Heart right ventricle (tissue), 16 donors: ENCODE measurements at regions of chr1 and their contacts with region 1.

Region 1: DNA sequence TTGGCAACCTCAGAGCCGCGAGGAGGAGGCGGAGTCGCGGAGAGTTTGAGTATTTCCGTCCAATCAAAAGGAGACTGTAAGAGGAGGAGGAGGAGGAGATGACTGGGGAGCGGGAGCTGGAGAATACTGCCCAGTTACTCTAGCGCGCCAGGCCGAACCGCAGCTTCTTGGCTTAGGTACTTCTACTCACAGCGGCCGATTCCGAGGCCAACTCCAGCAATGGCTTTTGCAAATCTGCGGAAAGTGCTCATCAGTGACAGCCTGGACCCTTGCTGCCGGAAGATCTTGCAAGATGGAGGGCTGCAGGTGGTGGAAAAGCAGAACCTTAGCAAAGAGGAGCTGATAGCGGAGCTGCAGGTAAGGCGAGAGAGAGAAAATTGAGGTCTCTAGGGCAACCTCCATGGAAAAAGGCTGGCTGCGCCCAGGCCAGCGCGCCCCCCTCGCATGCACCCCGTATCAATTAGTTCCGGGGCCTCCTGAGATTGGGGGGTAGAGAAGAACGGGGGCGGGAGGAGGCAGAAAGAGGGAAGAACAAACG is at the start of gene PHGDH:
- DNase-seq: peak; percentile 50 to 56
- ATAC-seq: peak; percentile 66 to 85 (median 78)
- H3K4me3 ChIP-seq: peak within 1 kb of the TSS; percentile 42 to 65 (median 60)
- H3K27ac ChIP-seq: peak within 1 kb of the TSS in 8 of 10 donors; percentile 44 to 77 (median 62)
- H3K4me1 ChIP-seq: peaks cover 0 to 26% (median 16%) of the 10 kb centered on the region in 9 donors
- H3K27me3 ChIP-seq: peaks cover 0 to 28% (median 16%) of the 10 kb centered on the region in 7 donors
- CTCF ChIP-seq: no peak
- total RNA-seq, gene PHGDH: 3.8 to 8.9 (median 5.0) TPM

Region 2: GRCh38 chr1:118960026-118960561 is 751.8 kb before region 1 on chr1:
- intact Hi-C with region 1: loop called in 1 of 10 experiments (anchors 10 kb)
- DNase-seq: no peak
- ATAC-seq: no peak
- H3K4me3 ChIP-seq: no peak overlapping the region
- H3K27ac ChIP-seq: no peak overlapping the region
- H3K4me1 ChIP-seq: no peaks in the 10 kb centered on the region
- H3K27me3 ChIP-seq: peaks cover 0 to 14% (median 0%) of the 10 kb centered on the region in 7 donors
- CTCF ChIP-seq: no peak

Region 3: GRCh38 chr1:119374208-119374874 is 337.5 kb before region 1 on chr1:
- intact Hi-C with region 1: loop called in 1 of 10 experiments (anchors 2 kb)
- DNase-seq: no peak
- ATAC-seq: no peak
- H3K4me3 ChIP-seq: no peak overlapping the region
- H3K27ac ChIP-seq: no peak overlapping the region
- H3K4me1 ChIP-seq: no peaks in the 10 kb centered on the region
- H3K27me3 ChIP-seq: peaks cover 0 to 7% (median 0%) of the 10 kb centered on the region in 7 donors
- CTCF ChIP-seq: no peak